PC-9 (cell line): ENCODE measurements at regions of chr12 and their contacts with region 1.

Region 1: GRCh38 chr12:51025836-51026638 is at the start of gene SLC11A2:
- DNase-seq: peak; percentile 89 to 92
- H3K4me3 ChIP-seq: peak within 1 kb of the TSS; percentile 77
- H3K27ac ChIP-seq: peak within 1 kb of the TSS; percentile 96
- H3K4me1 ChIP-seq: peaks cover 58% of the 10 kb centered on the region
- H3K27me3 ChIP-seq: no peaks in the 10 kb centered on the region
- CTCF ChIP-seq: no peak
- total RNA-seq, gene SLC11A2: 45.7 and 49.0 TPM in 2 replicates

Region 2: GRCh38 chr12:50763639-50764285 is 262.3 kb before region 1 on chr12 and contains the start of gene ATF1:
- CTCF ChIA-PET with region 1: interaction called, 5 read pairs
- POLR2A ChIA-PET with region 1: no interaction called
- intact Hi-C with region 1: loop called (anchors 2 kb)
- DNase-seq: peak; percentile 79 to 86
- H3K4me3 ChIP-seq: peak within 1 kb of the TSS; percentile 88
- H3K27ac ChIP-seq: peak within 1 kb of the TSS; percentile 92
- H3K4me1 ChIP-seq: peaks cover 27% of the 10 kb centered on the region
- H3K27me3 ChIP-seq: no peaks in the 10 kb centered on the region
- CTCF ChIP-seq: no peak
- total RNA-seq, gene ATF1: 29.8 and 37.9 TPM in 2 replicates

Region 3: DNA sequence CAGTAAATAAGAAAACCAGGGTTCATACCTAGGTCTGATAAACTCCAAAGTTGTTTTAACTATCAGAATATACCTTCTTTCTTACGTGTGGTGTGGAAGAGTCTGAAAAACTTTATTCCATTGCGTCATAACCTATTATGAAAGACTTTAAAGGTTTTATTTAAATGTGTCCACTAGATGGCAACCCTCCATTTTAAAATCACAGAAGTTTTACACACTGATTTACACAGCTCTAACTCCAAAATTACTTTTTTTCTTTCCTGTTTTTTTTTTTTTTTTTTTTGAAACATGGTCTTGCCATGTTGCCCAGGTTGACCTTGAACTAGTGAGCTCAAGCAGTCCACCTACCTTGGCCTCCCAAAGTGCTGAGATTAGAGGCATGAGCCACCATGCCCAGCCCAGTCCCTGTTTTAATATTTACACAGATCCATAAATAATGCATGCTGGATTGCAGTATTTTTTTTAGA is 200.6 kb before region 1 on chr12:
- CTCF ChIA-PET with region 1: interaction called, 7 read pairs
- POLR2A ChIA-PET with region 1: no interaction called
- intact Hi-C with region 1: loop called (anchors 1 kb)
- DNase-seq: peak in 1 of 2 experiments; percentile 66
- H3K4me3 ChIP-seq: no peak overlapping the region
- H3K27ac ChIP-seq: peak overlapping the region; percentile 47
- H3K4me1 ChIP-seq: peaks cover 4% of the 10 kb centered on the region
- H3K27me3 ChIP-seq: no peaks in the 10 kb centered on the region
- CTCF ChIP-seq: peak; percentile 79

Region 4: DNA sequence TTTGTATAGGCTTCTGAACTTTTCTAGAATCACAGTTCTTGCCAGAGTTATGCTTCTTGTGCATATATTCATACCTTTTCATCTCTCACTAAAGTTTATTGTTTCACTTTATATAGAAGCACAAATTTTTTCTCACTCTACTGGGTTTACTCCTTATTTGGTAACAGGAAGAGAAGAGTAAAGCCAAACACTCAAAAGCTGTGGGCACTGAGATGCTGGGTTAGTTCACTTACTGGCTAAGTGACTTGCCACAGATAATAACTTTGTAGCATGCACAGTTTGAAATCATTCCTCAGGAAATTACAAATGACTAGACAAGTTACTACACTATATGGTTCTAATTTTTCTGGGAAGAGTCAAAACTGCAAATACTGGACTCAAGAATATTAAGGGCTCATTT is 65.9 kb before region 1 on chr12:
- CTCF ChIA-PET with region 1: no interaction called
- POLR2A ChIA-PET with region 1: no interaction called
- intact Hi-C with region 1: no loop called
- DNase-seq: no peak
- H3K4me3 ChIP-seq: no peak overlapping the region
- H3K27ac ChIP-seq: no peak overlapping the region
- H3K4me1 ChIP-seq: no peaks in the 10 kb centered on the region
- H3K27me3 ChIP-seq: no peaks in the 10 kb centered on the region
- CTCF ChIP-seq: no peak

Region 5: GRCh38 chr12:50986966-50987737 is 38.9 kb before region 1 on chr12:
- CTCF ChIA-PET with region 1: interaction called, 6 read pairs
- POLR2A ChIA-PET with region 1: no interaction called
- intact Hi-C with region 1: loop called (anchors 5 kb)
- DNase-seq: peak in 1 of 2 experiments; percentile 18
- H3K4me3 ChIP-seq: no peak overlapping the region
- H3K27ac ChIP-seq: no peak overlapping the region
- H3K4me1 ChIP-seq: no peaks in the 10 kb centered on the region
- H3K27me3 ChIP-seq: no peaks in the 10 kb centered on the region
- CTCF ChIP-seq: peak; percentile 62; the same call in 1 of the 2 replicates

Region 6: GRCh38 chr12:51047655-51048540 is 21.9 kb after region 1 on chr12 and contains the start of gene LETMD1:
- CTCF ChIA-PET with region 1: interaction called, 5 read pairs
- POLR2A ChIA-PET with region 1: interaction called, 5 read pairs
- intact Hi-C with region 1: loop called (anchors 1 kb)
- DNase-seq: peak; percentile 89 to 96
- H3K4me3 ChIP-seq: peak within 1 kb of the TSS; percentile 94
- H3K27ac ChIP-seq: peak within 1 kb of the TSS; percentile 67
- H3K4me1 ChIP-seq: peaks cover 19% of the 10 kb centered on the region
- H3K27me3 ChIP-seq: no peaks in the 10 kb centered on the region
- CTCF ChIP-seq: peak; percentile 91
- total RNA-seq, gene LETMD1: 81.9 and 87.4 TPM in 2 replicates

Region 7: GRCh38 chr12:51441583-51441982 is 415.5 kb after region 1 on chr12:
- CTCF ChIA-PET with region 1: no interaction called
- POLR2A ChIA-PET with region 1: no interaction called
- intact Hi-C with region 1: no loop called
- DNase-seq: no peak
- H3K4me3 ChIP-seq: no peak overlapping the region
- H3K27ac ChIP-seq: no peak overlapping the region
- H3K4me1 ChIP-seq: no peaks in the 10 kb centered on the region
- H3K27me3 ChIP-seq: no peaks in the 10 kb centered on the region
- CTCF ChIP-seq: no peak